GM10248 (cell line): ENCODE measurements at regions of chr16 and their contacts with region 1.

Region 1: GRCh38 chr16:83926726-83927397 is 26.2 kb upstream of the OSGIN1 start:
- DNase-seq: peak; percentile 84
- CTCF ChIP-seq: peak; percentile 98

Region 2: GRCh38 chr16:83674931-83675535 is 251.8 kb before region 1 on chr16:
- CTCF ChIA-PET with region 1: no interaction called
- POLR2A ChIA-PET with region 1: no interaction called
- DNase-seq: no peak
- CTCF ChIP-seq: no peak

Region 3: DNA sequence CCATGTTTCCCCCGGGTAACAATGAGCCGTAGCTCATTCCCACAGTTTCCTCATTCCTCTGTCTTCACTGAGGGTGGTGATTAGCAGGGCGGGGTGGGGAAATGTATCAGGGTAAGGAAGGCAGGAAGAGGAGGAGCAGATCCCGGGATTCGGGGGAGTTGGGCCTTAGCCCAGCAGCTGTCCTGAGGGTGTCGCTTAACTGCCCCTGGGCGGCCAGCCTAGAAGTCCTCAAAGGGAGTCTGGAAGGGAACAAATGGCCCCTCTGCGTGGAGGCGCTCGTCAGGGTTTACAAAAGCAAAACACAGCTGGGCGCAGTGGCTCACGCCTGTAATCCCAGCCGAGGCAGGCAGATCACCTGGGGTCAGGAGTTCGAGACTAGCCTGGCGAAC is 13.6 kb before region 1 on chr16:
- CTCF ChIA-PET with region 1: interaction called, 45 read pairs
- POLR2A ChIA-PET with region 1: no interaction called
- DNase-seq: no peak
- CTCF ChIP-seq: no peak

Region 4: DNA sequence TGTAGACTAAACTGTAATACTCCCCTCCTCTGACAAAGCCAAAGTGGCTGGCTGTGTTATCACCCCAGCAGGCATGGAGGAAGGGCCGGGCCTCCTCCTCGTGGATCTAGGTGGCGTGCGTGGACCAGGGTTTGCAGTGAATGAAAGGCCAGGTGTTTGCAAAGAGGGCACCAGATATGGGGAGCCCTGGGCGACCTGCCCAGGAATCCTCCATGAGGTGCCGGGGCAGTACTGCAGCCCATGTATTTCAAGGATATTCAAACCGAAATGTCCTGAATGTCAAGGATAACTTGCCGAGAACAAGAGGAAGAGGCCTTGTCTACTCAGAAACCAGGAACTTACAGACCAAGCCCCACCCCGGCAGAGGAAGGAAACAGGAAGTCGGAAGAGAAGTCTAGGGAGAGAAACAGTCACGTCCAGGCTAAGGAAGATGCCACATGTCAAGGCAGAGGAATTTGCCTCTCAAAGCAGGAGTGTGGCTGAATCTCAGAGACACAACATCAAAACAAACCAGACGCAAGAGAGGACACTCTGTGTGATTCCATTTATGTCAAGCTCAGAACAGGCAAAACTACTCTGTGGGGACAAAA is 12.5 kb after region 1 on chr16:
- CTCF ChIA-PET with region 1: interaction called, 10 read pairs
- POLR2A ChIA-PET with region 1: no interaction called
- DNase-seq: no peak
- CTCF ChIP-seq: no peak